ENCODE measurements at regions of chr10 and their contacts with region 1.

Region 1: GRCh38 chr10:86684331-86685097 is 16.2 kb downstream of the LDB3 start:
- H3K4me3 ChIP-seq: no peak overlapping the region
- H3K27ac ChIP-seq: no peak overlapping the region
- H3K4me1 ChIP-seq: no peaks in the 10 kb centered on the region
- CTCF ChIP-seq: peak; percentile 86

Region 2: GRCh38 chr10:86644152-86644793 is 40.2 kb before region 1 on chr10:
- CTCF ChIA-PET with region 1: interaction called, 46 read pairs
- POLR2A ChIA-PET with region 1: no interaction called
- H3K4me3 ChIP-seq: no peak overlapping the region
- H3K27ac ChIP-seq: no peak overlapping the region
- H3K4me1 ChIP-seq: peaks cover 9% of the 10 kb centered on the region
- CTCF ChIP-seq: no peak

Measured in HEK293 (cell line).